CD4-positive, alpha-beta memory T cell (primary cell): ENCODE measurements at regions of chr10 and their contacts with region 1.

Region 1: DNA sequence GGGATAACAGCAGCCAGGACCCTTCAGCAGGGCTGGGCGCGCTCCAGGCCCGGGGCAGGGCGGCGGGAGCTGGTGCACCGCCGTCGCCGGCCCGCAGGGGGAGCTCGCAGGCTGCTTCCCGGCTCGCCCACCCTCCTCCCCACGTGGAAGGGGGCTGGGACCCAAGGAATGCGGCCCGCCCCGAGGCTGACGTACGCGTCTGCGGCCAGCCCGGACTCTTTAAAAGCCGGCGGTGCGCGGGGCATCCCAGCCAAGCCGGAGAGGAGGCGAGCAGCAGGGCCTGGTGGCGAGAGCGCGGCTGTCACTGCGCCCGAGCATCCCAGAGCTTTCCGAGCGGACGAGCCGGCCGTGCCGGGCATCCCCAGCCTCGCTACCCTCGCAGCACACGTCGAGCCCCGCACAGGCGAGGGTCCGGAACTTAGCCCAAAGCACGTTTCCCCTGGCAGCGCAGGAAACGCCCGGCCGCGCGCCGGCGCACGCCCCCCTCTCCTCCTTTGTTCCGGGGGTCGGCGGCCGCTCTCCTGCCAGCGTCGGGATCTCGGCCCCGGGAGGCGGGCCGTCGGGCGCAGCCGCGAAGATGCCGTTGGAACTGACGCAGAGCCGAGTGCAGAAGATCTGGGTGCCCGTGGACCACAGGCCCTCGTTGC is at the start of gene PFKFB3:
- DNase-seq: peak; percentile 84 to 90 (median 86)
- H3K4me3 ChIP-seq: peak within 1 kb of the TSS; percentile 77 to 84
- H3K4me3 Mint-ChIP-seq: peak within 1 kb of the TSS; percentile 95 to 99 (median 96)
- H3K27ac ChIP-seq: peak within 1 kb of the TSS; percentile 71
- H3K27ac Mint-ChIP-seq: peak within 1 kb of the TSS; percentile 94 to 97 (median 96)
- H3K4me1 ChIP-seq: peaks cover 23% of the 10 kb centered on the region
- H3K4me1 Mint-ChIP-seq: peaks cover 22 to 51% (median 27%) of the 10 kb centered on the region in 4 donors
- H3K27me3 ChIP-seq: no peaks in the 10 kb centered on the region
- H3K27me3 Mint-ChIP-seq: no peaks in the 10 kb centered on the region
- total RNA-seq, gene PFKFB3: 55.7 to 67.1 TPM

Region 2: DNA sequence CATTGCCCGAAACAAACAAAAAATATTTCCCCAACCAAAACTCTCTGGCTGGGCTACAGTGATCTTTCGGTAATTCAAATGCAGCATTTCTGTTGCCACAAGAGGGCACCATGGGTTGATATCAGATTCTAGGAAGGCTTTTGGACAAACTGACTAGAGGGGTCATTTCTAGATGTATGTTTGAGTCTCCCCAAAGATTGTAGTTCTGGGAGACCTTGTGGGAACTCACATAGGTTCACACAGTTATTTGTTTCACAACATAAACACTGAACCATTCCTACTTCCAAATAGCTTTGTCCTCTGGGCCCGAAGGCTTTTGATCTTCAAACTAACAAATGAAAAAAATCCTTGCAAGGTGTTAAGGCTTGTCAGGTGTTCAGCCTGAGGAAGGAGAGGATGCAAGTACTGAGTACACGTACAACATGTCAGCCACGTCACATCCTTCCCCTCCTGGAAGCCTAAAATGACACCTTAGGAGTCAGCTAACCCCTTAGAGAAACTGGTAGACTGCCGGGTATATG is 188.5 kb before region 1 on chr10:
- CTCF ChIA-PET with region 1: no interaction called
- POLR2A ChIA-PET with region 1: no interaction called
- intact Hi-C with region 1: loop called (anchors 1 kb)
- DNase-seq: peak; percentile 76 to 92 (median 83)
- H3K4me3 ChIP-seq: no peak overlapping the region
- H3K4me3 Mint-ChIP-seq: peak overlapping the region in 6 of 8 donors; percentile 26 to 82 (median 40)
- H3K27ac ChIP-seq: peak overlapping the region; percentile 70
- H3K27ac Mint-ChIP-seq: peak overlapping the region; percentile 92 to 99 (median 97)
- H3K4me1 ChIP-seq: peaks cover 23% of the 10 kb centered on the region
- H3K4me1 Mint-ChIP-seq: peaks cover 16 to 41% (median 20%) of the 10 kb centered on the region in 4 donors
- H3K27me3 ChIP-seq: no peaks in the 10 kb centered on the region
- H3K27me3 Mint-ChIP-seq: no peaks in the 10 kb centered on the region

Region 3: DNA sequence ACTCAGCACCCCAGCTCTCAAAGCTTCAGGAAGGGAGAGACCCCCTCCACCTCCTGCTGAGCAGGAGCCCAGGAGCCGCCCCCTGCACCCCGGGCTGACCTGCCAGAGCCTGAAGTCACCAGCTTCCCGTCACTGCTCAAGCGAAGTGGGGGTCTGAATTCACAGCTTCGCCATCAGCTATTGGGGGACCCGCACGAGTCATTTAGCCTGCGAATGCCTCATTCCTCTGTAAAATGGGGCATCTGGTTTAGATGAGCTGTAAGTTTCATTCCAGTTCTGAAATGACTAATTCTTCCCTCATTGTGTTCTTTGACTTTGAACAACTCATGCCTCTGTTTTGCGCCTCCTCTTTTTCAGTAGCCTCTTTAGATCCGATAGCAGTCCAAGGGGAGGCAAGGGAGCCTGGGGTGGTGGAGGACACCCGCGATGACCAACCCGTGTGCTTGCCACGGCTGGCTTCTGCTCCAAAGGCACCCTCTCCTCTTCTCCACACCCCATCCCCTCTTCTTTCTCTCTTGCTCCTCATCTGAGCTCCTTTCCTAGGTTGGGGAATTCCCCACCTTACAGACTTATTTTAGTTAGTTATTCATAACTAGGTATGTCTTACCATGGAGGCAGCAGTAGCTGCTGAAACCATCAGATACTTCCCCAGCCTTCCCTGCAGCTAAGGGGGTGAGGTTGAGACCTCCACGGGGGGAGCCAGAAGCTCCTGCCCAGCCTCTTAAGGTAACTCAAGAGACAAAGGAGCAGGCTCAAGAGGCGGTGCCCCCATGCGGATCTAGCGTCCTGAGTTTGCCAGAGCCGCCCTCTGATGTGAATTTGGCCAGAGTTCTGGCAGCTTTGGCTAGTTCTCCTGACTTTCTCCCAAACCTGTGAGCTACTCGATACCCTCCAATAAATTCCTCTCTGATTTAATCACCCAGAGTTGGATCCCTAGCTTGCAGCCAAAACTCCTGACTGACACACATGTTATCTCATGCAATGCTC is 66.3 kb before region 1 on chr10:
- CTCF ChIA-PET with region 1: interaction called, 10 read pairs
- POLR2A ChIA-PET with region 1: interaction called, 15 read pairs
- intact Hi-C with region 1: no loop called
- DNase-seq: peak in 1 of 5 donors; percentile 61
- H3K4me3 ChIP-seq: no peak overlapping the region
- H3K4me3 Mint-ChIP-seq: peak overlapping the region in 7 of 8 donors; percentile 36 to 79 (median 63)
- H3K27ac ChIP-seq: peak overlapping the region; percentile 27
- H3K27ac Mint-ChIP-seq: peak overlapping the region; percentile 59 to 95 (median 89)
- H3K4me1 ChIP-seq: peaks cover 53% of the 10 kb centered on the region
- H3K4me1 Mint-ChIP-seq: peaks cover 43 to 64% (median 56%) of the 10 kb centered on the region in 4 donors
- H3K27me3 ChIP-seq: no peaks in the 10 kb centered on the region
- H3K27me3 Mint-ChIP-seq: no peaks in the 10 kb centered on the region

Region 4: DNA sequence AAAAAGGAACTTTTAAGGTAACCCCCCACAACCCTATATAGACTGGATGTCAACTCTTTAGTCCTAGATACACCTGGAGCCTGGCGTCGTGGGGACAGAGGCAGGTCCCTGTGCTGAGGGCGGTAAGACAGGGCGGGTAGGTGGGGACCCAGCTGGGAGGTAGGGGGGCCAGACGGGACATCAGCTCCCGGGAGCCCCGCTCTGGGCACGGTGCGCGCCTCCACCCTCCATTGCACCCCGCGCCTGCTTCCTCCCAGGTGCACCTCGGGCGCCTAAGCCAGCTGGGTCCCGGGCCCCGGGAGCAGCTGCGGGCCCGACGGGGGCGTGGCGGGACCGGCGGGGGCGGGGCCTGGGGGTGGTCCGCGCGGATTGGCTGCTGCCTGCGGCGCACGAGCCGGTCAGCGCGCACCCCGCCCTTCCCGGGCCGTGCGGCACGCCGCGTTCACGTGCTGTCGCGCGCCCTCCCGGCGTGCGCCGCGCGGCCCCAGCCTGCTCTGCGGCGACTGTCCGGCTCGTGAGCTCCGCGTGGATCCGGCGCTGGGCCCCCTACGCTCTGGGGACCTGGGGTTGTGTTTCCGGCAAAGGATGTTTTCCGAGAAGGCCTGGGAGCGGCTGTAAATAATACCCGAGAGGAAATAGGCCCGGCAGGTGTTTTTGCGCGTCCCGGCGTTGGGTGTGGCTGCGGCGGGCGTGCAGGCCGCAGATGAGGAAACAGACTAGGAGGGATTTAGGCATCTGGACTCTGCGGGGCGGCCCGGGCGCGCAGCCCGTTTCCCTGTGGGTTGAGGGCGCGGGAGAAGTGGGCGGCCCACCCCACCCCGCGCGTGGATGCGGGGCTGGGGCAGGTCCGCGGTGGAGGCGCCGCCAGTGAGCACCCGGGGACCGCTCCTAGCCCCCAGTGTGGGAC is 39.2 kb before region 1 on chr10:
- CTCF ChIA-PET with region 1: interaction called, 22 read pairs
- POLR2A ChIA-PET with region 1: interaction called, 49 read pairs
- intact Hi-C with region 1: loop called (anchors 1 kb)
- DNase-seq: peak; percentile 90 to 94 (median 91)
- H3K4me3 ChIP-seq: peak overlapping the region; percentile 77 to 84
- H3K4me3 Mint-ChIP-seq: peak overlapping the region; percentile 77 to 95 (median 92)
- H3K27ac ChIP-seq: peak overlapping the region; percentile 89
- H3K27ac Mint-ChIP-seq: peak overlapping the region; percentile 92 to 98 (median 97)
- H3K4me1 ChIP-seq: peaks cover 55% of the 10 kb centered on the region
- H3K4me1 Mint-ChIP-seq: peaks cover 28 to 64% (median 46%) of the 10 kb centered on the region in 4 donors
- H3K27me3 ChIP-seq: no peaks in the 10 kb centered on the region
- H3K27me3 Mint-ChIP-seq: no peaks in the 10 kb centered on the region

Region 5: DNA sequence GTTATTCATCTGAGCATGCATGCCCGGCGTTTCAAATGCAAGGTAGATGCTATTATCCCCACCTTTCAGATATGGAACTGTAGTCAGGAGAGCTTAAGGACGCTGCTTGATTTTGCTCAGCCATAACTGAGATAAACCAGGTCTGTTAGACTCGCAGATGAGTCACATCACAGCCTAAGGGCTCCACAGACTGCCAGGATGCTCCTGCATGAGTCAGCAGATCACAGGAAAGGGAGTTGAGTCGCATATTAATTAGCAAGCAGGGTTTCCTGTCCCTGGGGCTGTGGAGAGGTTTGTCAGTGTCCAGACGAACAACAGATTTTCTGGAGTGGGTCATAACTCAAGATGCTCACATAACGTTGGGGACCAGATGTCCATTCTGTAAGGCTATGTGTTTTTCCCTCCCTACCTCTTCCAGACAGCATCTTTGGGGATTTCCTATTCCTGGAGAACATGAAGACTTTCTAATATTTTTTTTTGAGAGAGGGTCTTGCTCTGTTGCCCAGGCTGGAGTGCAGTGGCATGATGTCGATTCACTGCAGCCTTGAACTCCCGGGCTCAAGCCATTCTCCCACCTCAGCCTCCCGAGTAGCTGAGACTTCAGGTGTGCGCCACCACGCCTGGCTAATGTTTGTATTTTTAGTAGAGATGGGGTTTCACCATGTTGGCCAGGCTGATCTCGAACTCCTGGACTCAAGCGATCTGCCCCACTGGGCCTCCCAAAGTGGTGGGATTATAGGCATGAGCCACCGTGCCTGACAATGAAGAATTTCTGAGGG is 36.6 kb after region 1 on chr10:
- CTCF ChIA-PET with region 1: interaction called, 3 read pairs
- POLR2A ChIA-PET with region 1: interaction called, 5 read pairs
- intact Hi-C with region 1: loop called (anchors 2 kb)
- DNase-seq: peak in 4 of 5 donors; percentile 14 to 84 (median 20)
- H3K4me3 ChIP-seq: no peak overlapping the region
- H3K4me3 Mint-ChIP-seq: peak overlapping the region in 2 of 8 donors; percentile 13 to 32
- H3K27ac ChIP-seq: no peak overlapping the region
- H3K27ac Mint-ChIP-seq: peak overlapping the region; percentile 20 to 78 (median 63)
- H3K4me1 ChIP-seq: peaks cover 12% of the 10 kb centered on the region
- H3K4me1 Mint-ChIP-seq: peaks cover 12 to 22% (median 13%) of the 10 kb centered on the region in 4 donors
- H3K27me3 ChIP-seq: no peaks in the 10 kb centered on the region
- H3K27me3 Mint-ChIP-seq: no peaks in the 10 kb centered on the region

Region 6: DNA sequence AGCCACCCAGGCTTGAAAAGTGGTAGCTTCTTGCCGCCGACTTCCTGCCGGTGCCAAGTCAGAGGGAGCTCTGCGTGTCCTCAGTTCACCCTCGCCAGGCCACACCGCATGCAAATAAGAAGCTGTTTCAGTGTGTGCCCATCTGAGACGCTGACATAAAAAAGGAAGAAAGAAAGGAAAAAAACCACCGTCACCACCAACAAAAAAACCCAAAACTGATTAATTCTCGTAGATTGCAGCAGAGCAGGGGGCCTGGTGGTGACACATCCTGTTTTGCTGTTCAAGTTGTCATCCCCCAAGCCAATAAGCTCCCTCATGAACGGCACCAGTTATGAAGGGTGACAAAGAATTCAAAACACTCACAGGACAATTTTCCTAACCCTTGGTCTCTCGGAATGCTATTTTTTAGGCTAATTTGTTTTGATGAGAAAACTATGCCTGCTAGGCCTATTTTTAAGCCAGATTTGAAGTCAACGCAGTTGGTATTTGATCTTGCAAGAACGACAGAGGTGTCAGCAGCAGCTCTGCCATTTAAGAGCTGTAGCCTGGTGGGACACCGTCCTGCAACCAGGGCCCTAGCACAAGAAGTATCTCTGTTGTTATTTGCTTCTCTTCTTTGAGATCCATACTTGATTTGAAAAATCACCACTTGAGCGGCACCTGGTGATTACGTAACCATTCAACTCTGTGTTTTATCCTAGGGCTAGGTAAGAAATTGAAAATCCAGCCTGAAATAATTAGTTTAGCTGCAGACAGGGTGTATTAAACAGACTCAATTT is 145.5 kb after region 1 on chr10:
- CTCF ChIA-PET with region 1: interaction called, 49 read pairs
- POLR2A ChIA-PET with region 1: interaction called, 39 read pairs
- intact Hi-C with region 1: loop called (anchors 1 kb)
- DNase-seq: peak; percentile 87 to 95 (median 89)
- H3K4me3 ChIP-seq: peak overlapping the region in 1 of 2 donors; percentile 43
- H3K4me3 Mint-ChIP-seq: peak overlapping the region; percentile 77 to 90 (median 80)
- H3K27ac ChIP-seq: peak overlapping the region; percentile 55
- H3K27ac Mint-ChIP-seq: peak overlapping the region; percentile 93 to 97 (median 96)
- H3K4me1 ChIP-seq: peaks cover 31% of the 10 kb centered on the region
- H3K4me1 Mint-ChIP-seq: peaks cover 35 to 56% (median 45%) of the 10 kb centered on the region in 4 donors
- H3K27me3 ChIP-seq: no peaks in the 10 kb centered on the region
- H3K27me3 Mint-ChIP-seq: no peaks in the 10 kb centered on the region

Region 7: DNA sequence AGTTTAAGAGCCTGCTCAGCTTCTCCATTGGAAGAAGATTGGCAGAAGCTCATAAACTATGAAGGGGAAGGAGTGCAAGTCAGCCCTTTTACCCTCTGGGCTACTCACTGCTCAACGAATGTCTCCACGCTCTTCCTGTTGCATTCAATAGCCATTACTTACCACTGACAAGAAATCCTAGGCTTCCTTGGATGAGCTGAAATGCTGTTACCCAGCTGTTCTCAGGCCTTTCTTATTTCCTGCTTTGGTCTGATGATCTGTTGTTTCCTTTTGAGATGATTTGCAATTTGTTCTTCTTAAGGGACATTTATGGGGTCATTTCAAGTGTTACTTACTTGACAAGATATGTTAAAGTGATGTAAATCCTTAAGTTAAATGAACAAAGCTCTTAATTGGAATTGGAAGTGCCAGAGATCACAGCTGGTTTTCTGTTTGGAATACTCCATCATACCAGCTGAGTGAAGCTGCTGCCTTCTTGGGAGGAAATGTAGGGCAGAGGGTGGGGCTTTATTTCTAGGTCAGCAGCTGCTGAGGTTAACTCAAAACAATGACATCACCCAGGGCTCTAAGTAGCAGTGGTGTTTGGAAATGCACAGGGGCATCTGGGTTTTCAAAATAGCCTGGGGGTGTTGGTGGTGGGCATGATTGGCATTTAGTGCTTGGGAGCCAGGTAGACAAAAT is 207.3 kb after region 1 on chr10:
- CTCF ChIA-PET with region 1: interaction called, 45 read pairs
- POLR2A ChIA-PET with region 1: interaction called, 33 read pairs
- intact Hi-C with region 1: loop called (anchors 1 kb)
- DNase-seq: peak; percentile 71 to 84 (median 79)
- H3K4me3 ChIP-seq: peak overlapping the region; percentile 11 to 34
- H3K4me3 Mint-ChIP-seq: peak overlapping the region; percentile 76 to 93 (median 81)
- H3K27ac ChIP-seq: peak overlapping the region; percentile 78
- H3K27ac Mint-ChIP-seq: peak overlapping the region; percentile 93 to 99 (median 98)
- H3K4me1 ChIP-seq: peaks cover 50% of the 10 kb centered on the region
- H3K4me1 Mint-ChIP-seq: peaks cover 31 to 66% (median 44%) of the 10 kb centered on the region in 4 donors
- H3K27me3 ChIP-seq: no peaks in the 10 kb centered on the region
- H3K27me3 Mint-ChIP-seq: no peaks in the 10 kb centered on the region